ENCODE measurements at regions of chr1 and their contacts with region 1.

Region 1: GRCh38 chr1:1115786-1116700 is at the start of gene C1orf159:
- DNase-seq: peak; percentile 98
- H3K4me3 ChIP-seq: peak within 1 kb of the TSS in 1 of 2 donors; percentile 67
- H3K4me3 Mint-ChIP-seq: peak within 1 kb of the TSS; percentile 79 to 95 (median 86)
- H3K27ac ChIP-seq: peak within 1 kb of the TSS; percentile 71
- H3K27ac Mint-ChIP-seq: peak within 1 kb of the TSS; percentile 77 to 93 (median 82)
- H3K4me1 ChIP-seq: peaks cover 11% of the 10 kb centered on the region
- H3K4me1 Mint-ChIP-seq: peaks cover 3 to 18% (median 8%) of the 10 kb centered on the region in 4 donors
- H3K27me3 ChIP-seq: no peaks in the 10 kb centered on the region
- H3K27me3 Mint-ChIP-seq: peaks cover 3 to 5% of the 10 kb centered on the region in 2 donors
- total RNA-seq, gene C1orf159: 15.0 to 15.1 TPM

Region 2: GRCh38 chr1:1013105-1013921 is 102.7 kb before region 1 on chr1 and contains the start of gene ISG15:
- CTCF ChIA-PET with region 1: interaction called, 3 read pairs
- POLR2A ChIA-PET with region 1: interaction called, 3 read pairs
- intact Hi-C with region 1: loop called (anchors 1 kb)
- DNase-seq: peak; percentile 82 to 94 (median 88)
- H3K4me3 ChIP-seq: peak within 1 kb of the TSS; percentile 54 to 88
- H3K4me3 Mint-ChIP-seq: peak within 1 kb of the TSS; percentile 96 to 100 (median 98)
- H3K27ac ChIP-seq: peak within 1 kb of the TSS; percentile 88
- H3K27ac Mint-ChIP-seq: peak within 1 kb of the TSS; percentile 90 to 99 (median 98)
- H3K4me1 ChIP-seq: peaks cover 16% of the 10 kb centered on the region
- H3K4me1 Mint-ChIP-seq: peaks cover 14 to 33% (median 25%) of the 10 kb centered on the region in 4 donors
- H3K27me3 ChIP-seq: no peaks in the 10 kb centered on the region
- H3K27me3 Mint-ChIP-seq: peaks cover under 1 to 11% of the 10 kb centered on the region in 2 donors
- total RNA-seq, gene ISG15: 31.6 to 33.2 TPM

Region 3: DNA sequence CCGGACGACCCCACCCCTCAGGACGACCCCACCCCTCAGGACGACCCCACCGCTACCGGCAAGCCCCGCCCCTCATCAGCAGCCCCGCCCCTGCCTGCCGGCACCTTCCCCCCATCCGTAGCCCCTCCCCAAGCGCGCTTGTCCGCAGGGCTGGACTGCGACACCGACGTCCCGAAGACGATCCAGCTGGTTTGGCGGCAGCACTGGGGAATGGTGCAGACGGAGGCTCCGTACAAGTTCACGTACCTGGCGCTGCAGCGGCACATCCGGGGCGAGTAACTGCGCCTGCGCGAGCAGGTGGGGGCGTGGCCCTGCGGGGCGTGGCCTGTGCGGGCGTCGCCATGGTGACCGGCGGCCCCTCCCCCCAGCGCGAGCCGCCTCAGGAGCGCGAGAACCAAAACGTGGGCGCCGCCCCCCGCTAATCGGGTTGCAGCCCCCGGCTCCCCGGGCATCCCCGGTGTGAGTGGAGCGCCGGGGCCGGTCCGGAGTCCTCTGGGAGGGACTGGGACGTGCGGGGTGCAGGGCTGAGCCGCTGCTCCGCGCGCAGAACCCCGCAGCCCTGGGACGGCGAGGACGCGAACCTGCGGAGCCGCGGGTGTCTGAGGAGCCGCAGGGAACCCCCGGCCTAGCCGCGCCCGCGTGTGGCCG is 46.9 kb before region 1 on chr1:
- CTCF ChIA-PET with region 1: no interaction called
- POLR2A ChIA-PET with region 1: no interaction called
- intact Hi-C with region 1: loop called (anchors 1 kb)
- DNase-seq: peak; percentile 87 to 92 (median 88)
- H3K4me3 ChIP-seq: peak overlapping the region in 1 of 2 donors; percentile 70
- H3K4me3 Mint-ChIP-seq: peak overlapping the region; percentile 63 to 88 (median 74)
- H3K27ac ChIP-seq: peak overlapping the region; percentile 51
- H3K27ac Mint-ChIP-seq: peak overlapping the region in 4 of 7 donors; percentile 42 to 88 (median 64)
- H3K4me1 ChIP-seq: peaks cover 12% of the 10 kb centered on the region
- H3K4me1 Mint-ChIP-seq: peaks cover 0 to 8% (median 2%) of the 10 kb centered on the region in 4 donors
- H3K27me3 ChIP-seq: no peaks in the 10 kb centered on the region
- H3K27me3 Mint-ChIP-seq: peaks cover 2 to 7% of the 10 kb centered on the region in 2 donors

Region 4: DNA sequence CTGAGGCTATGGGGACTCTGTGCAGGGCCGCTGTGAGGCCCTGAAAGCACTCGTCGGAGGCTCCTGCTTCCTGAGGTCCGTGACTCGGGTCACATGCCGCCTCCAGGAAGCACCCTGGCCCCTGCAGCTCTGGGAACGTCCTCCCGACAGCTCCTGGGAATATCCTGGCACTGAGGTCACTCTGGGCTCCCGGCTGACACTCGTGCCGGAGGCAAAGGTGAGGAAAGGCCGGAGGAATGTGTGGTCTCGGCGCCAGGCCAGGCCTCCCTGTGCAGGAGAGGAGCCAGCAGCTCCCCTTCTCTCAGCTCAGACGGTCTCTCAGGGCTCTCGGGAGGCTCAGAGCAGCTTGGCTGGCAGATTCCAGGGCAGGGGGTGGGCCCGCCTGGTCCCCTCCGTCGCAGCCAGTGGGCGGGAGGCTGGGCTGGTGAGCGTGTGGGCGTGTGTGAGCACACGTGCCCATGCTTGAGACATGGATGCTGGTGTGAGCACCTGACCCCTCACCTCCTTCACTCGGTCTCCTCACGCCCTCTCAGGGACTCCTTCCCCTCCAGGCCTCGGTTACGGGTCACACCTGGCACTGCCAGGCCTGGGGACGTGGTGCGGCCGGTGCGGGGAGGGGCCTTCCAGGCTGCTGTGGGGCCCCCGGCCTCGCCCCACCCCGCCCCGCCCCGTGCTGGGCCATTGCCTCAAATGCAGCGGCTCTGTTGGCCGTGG is 36.5 kb before region 1 on chr1:
- CTCF ChIA-PET with region 1: no interaction called
- POLR2A ChIA-PET with region 1: no interaction called
- intact Hi-C with region 1: no loop called
- DNase-seq: peak in 2 of 5 donors; percentile 32 to 50
- H3K4me3 ChIP-seq: peak overlapping the region in 1 of 2 donors; percentile 11
- H3K4me3 Mint-ChIP-seq: peak overlapping the region in 6 of 8 donors; percentile 24 to 69 (median 41)
- H3K27ac ChIP-seq: no peak overlapping the region
- H3K27ac Mint-ChIP-seq: no peak overlapping the region
- H3K4me1 ChIP-seq: peaks cover 10% of the 10 kb centered on the region
- H3K4me1 Mint-ChIP-seq: peaks cover 0 to 4% (median 2%) of the 10 kb centered on the region in 4 donors
- H3K27me3 ChIP-seq: no peaks in the 10 kb centered on the region
- H3K27me3 Mint-ChIP-seq: peaks cover 2 to 3% of the 10 kb centered on the region in 2 donors

Region 5: GRCh38 chr1:1144122-1144842 is 28.2 kb after region 1 on chr1:
- CTCF ChIA-PET with region 1: no interaction called
- POLR2A ChIA-PET with region 1: no interaction called
- intact Hi-C with region 1: no loop called
- DNase-seq: peak; percentile 72 to 81 (median 75)
- H3K4me3 ChIP-seq: no peak overlapping the region
- H3K4me3 Mint-ChIP-seq: peak overlapping the region in 6 of 8 donors; percentile 31 to 68 (median 58)
- H3K27ac ChIP-seq: peak overlapping the region; percentile 55
- H3K27ac Mint-ChIP-seq: peak overlapping the region; percentile 82 to 99 (median 93)
- H3K4me1 ChIP-seq: peaks cover 23% of the 10 kb centered on the region
- H3K4me1 Mint-ChIP-seq: peaks cover 5 to 10% (median 7%) of the 10 kb centered on the region in 4 donors
- H3K27me3 ChIP-seq: no peaks in the 10 kb centered on the region
- H3K27me3 Mint-ChIP-seq: no peaks in the 10 kb centered on the region

Region 6: GRCh38 chr1:1164701-1165451 is 48.8 kb after region 1 on chr1:
- CTCF ChIA-PET with region 1: no interaction called
- POLR2A ChIA-PET with region 1: no interaction called
- intact Hi-C with region 1: no loop called
- DNase-seq: peak in 1 of 5 donors; percentile 11
- H3K4me3 ChIP-seq: no peak overlapping the region
- H3K4me3 Mint-ChIP-seq: no peak overlapping the region
- H3K27ac ChIP-seq: no peak overlapping the region
- H3K27ac Mint-ChIP-seq: no peak overlapping the region
- H3K4me1 ChIP-seq: peaks cover 2% of the 10 kb centered on the region
- H3K4me1 Mint-ChIP-seq: peaks cover under 1 to 2% (median 1%) of the 10 kb centered on the region in 4 donors
- H3K27me3 ChIP-seq: no peaks in the 10 kb centered on the region
- H3K27me3 Mint-ChIP-seq: peaks cover 1 to 5% of the 10 kb centered on the region in 2 donors

Region 7: DNA sequence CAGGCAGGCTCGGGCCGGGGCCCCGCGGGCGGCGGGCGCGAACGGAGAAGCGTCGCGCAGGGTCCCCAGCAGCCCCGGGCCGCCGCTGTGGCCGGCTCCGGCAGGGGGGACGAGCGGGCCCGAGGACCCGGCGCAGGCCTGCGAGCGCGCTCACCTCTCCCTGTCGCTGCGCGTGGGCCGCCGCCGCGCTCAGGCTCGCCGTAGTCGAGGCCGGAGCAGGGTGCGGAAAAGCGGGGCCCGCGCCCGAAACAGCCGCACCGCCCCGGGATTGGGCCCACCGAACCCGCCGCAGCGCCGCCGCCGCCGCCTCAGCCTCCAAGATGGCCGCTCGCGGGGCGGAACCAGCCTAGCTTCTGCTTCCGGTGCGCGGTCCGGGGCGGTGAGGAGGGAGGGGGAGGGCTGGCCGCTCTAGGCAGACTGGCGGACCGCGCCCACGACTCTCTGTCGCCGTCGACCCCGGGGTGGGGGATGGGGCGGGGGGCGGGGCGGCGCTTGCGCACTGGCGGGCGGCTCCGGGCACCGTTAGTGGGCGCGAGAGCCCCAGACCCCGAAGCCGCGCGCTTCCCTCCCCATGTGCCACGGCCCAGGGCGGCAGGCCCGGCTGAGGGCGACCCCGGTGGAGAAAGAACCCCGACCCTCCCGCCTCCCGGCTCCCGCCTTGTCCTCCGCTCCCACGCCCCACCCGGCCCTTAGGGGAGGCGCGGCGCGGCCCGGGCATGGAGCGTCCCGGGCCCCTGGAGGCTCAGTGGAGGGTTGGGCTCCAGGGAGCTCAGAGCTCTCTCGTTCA is 157.7 kb after region 1 on chr1 and contains the start of gene UBE2J2:
- CTCF ChIA-PET with region 1: no interaction called
- POLR2A ChIA-PET with region 1: no interaction called
- intact Hi-C with region 1: loop called (anchors 1 kb)
- DNase-seq: peak; percentile 89 to 92 (median 90)
- H3K4me3 ChIP-seq: peak within 1 kb of the TSS; percentile 33 to 80
- H3K4me3 Mint-ChIP-seq: peak within 1 kb of the TSS; percentile 86 to 88 (median 87)
- H3K27ac ChIP-seq: peak within 1 kb of the TSS; percentile 83
- H3K27ac Mint-ChIP-seq: peak within 1 kb of the TSS; percentile 83 to 96 (median 89)
- H3K4me1 ChIP-seq: peaks cover 43% of the 10 kb centered on the region
- H3K4me1 Mint-ChIP-seq: peaks cover 22 to 40% (median 32%) of the 10 kb centered on the region in 4 donors
- H3K27me3 ChIP-seq: no peaks in the 10 kb centered on the region
- H3K27me3 Mint-ChIP-seq: no peaks in the 10 kb centered on the region
- total RNA-seq, gene UBE2J2: 82.8 to 92.9 TPM

Region 8: DNA sequence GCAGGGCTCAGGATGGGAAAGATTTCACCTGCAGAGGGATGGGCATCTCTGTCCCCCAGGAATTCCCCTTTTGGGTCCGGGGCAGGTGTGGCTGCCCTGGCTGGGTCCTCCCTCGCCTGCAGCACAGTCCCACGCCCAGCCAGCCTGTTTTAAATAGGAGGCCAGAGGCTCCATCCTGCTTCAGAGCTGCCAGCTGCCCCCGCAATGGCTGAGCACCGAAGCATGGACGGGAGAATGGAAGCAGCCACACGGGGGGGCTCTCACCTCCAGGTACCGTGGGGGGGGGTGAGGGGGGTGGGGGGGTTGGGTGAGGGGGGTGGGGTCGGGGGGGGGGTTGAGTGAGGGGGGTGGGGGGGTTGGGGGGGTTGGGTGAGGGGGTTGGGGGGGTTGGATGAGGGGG is 167.8 kb after region 1 on chr1:
- CTCF ChIA-PET with region 1: no interaction called
- POLR2A ChIA-PET with region 1: no interaction called
- intact Hi-C with region 1: no loop called
- DNase-seq: peak in 1 of 5 donors; percentile 7
- H3K4me3 ChIP-seq: no peak overlapping the region
- H3K4me3 Mint-ChIP-seq: no peak overlapping the region
- H3K27ac ChIP-seq: no peak overlapping the region
- H3K27ac Mint-ChIP-seq: no peak overlapping the region
- H3K4me1 ChIP-seq: no peaks in the 10 kb centered on the region
- H3K4me1 Mint-ChIP-seq: peaks cover 0 to 1% (median 0%) of the 10 kb centered on the region in 4 donors
- H3K27me3 ChIP-seq: no peaks in the 10 kb centered on the region
- H3K27me3 Mint-ChIP-seq: peaks cover 0 to 1% of the 10 kb centered on the region in 2 donors

Region 9: DNA sequence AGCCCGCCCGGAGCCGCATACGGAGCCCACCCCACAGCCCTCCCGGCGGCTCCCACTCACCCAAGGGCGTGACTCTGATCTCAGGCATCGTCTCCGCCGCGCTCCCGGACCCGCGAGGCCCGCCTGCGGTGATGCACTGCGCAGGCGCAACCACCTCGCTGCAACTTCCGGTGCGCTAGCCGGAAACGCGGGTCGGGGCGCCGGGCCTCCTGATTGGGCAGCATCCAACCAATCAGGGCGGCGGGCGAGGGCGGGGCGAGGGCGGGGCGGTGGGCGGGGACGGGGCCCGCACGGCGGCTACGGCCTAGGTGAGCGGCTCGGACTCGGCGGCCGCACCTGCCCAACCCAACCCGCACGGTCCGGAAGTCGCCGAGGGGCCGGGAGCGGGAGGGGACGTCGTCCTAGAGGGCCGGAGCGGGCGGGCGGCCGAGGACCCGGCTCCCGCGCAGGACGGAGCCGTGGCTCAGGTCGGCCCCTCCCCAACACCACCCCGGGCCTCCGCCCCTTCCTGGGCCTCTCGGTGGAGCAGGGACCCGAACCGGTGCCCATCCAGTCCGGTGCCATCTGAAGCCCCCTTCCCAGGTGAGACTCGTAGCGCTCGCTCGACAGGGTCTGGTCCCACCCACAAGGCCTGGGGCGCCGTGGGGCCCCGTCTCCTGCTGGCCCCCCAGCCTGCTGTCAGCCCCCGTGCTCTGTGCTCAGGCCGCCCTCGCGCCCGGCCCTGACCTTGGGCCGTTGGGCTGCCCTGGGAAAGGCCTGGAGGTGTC is 208.7 kb after region 1 on chr1 and contains the starts of genes CPTP and INTS11:
- CTCF ChIA-PET with region 1: no interaction called
- POLR2A ChIA-PET with region 1: no interaction called
- intact Hi-C with region 1: loop called (anchors 1 kb)
- DNase-seq: peak; percentile 95 to 96 (median 96)
- H3K4me3 ChIP-seq: peak within 1 kb of the TSS; percentile 49 to 77
- H3K4me3 Mint-ChIP-seq: peak within 1 kb of the TSS; percentile 87 to 97 (median 93)
- H3K27ac ChIP-seq: peak within 1 kb of the TSS; percentile 89
- H3K27ac Mint-ChIP-seq: peak within 1 kb of the TSS; percentile 77 to 97 (median 91)
- H3K4me1 ChIP-seq: peaks cover 41% of the 10 kb centered on the region
- H3K4me1 Mint-ChIP-seq: peaks cover 9 to 53% (median 34%) of the 10 kb centered on the region in 4 donors
- H3K27me3 ChIP-seq: no peaks in the 10 kb centered on the region
- H3K27me3 Mint-ChIP-seq: no peaks in the 10 kb centered on the region
- total RNA-seq, gene CPTP: 25.0 to 28.3 TPM
- total RNA-seq, gene INTS11: 163 to 173 TPM

Region 10: DNA sequence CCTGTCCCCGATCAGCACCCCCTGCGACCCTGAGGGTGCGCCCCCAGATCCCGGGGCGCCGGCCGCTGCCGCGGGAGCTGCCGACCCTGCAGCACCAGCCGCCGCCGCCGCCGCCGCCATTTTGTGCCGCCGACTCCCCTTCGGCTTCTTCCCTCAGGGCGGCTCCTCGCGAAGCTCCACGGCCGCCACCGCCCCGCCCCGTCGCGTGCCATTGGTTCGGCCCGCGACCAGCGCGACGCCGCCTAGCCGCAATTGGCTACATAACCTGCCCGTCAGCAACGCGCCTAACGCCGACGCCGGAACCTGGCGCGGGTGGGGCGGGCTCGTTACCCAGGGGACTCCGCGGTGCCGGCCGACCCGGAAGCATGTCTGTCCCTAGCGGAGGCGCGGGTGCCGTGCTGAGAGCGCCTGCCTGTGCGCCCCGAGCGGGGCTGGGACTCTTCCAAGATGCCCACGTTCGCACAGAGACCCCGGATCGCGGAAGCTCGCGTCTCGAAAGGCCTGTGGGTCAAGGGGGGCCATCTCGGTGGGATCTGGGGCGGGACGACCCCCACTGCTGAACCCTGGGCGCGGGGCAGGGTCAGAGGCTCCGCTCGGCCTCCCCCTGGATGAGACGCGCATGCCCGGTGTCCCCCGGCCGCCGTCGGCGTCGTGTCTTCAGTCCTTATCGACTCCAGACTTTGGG is 283.3 kb after region 1 on chr1 and contains the start of gene CCNL2:
- CTCF ChIA-PET with region 1: no interaction called
- POLR2A ChIA-PET with region 1: interaction called, 4 read pairs
- intact Hi-C with region 1: loop called (anchors 1 kb)
- DNase-seq: peak; percentile 98 to 99 (median 99)
- H3K4me3 ChIP-seq: peak within 1 kb of the TSS; percentile 92
- H3K4me3 Mint-ChIP-seq: peak within 1 kb of the TSS; percentile 89 to 94 (median 92)
- H3K27ac ChIP-seq: peak within 1 kb of the TSS; percentile 85
- H3K27ac Mint-ChIP-seq: peak within 1 kb of the TSS; percentile 89 to 96 (median 94)
- H3K4me1 ChIP-seq: peaks cover 36% of the 10 kb centered on the region
- H3K4me1 Mint-ChIP-seq: peaks cover 17 to 63% (median 41%) of the 10 kb centered on the region in 4 donors
- H3K27me3 ChIP-seq: no peaks in the 10 kb centered on the region
- H3K27me3 Mint-ChIP-seq: no peaks in the 10 kb centered on the region
- total RNA-seq, gene CCNL2: 388 to 394 TPM